Left lung (tissue), 14 donors: ENCODE measurements at regions of chr3 and their contacts with region 1.

Region 1: GRCh38 chr3:129633751-129634392 is 27.4 kb upstream of the PLXND1 start:
- DNase-seq: peak in 2 of 4 donors; percentile 34 to 71
- ATAC-seq: peak; percentile 61
- H3K4me3 ChIP-seq: no peak overlapping the region
- H3K27ac ChIP-seq: no peak overlapping the region
- H3K4me1 ChIP-seq: peaks cover 0 to 2% of the 10 kb centered on the region in 2 donors
- H3K27me3 ChIP-seq: no peaks in the 10 kb centered on the region
- CTCF ChIP-seq: no peak

Region 2: DNA sequence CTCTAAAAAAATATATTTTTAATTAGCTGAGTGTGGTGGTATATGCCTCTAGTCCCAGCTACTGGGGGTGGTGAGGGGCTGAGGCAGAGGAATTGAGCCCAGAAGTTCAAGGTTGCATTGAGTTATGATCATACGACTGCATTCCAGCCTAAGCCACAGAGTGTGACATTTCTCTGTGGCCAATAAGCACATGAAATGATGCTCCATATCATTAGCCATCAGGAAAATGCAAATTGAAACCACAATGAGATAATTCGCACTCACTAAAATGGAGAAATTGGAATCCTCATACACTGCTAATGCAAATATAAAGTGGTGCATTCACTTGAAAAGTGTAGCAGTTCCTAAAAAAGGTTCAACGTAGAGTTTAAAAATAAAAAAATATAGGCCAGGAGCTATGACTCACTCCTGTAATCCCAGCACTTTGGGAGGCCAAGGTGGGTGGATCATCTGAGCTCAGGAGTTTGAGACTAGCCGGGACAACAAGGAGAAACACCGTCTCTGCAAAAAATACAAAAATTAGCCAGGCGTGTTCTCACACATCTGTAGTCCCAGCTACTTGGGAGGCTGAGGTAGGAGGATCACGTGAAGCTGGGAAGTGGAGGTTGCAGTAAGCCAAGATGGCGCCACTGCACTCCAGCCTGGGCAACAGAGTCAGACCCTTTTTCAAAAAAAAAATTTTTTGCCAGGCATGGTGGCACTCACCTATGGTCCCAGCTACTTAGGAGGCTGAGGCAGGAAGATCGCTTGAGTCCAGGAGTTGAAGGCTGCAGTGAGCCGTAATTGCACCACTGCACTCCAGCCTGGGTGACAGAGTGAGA is 158.7 kb before region 1 on chr3:
- intact Hi-C with region 1: no loop called
- DNase-seq: no peak
- ATAC-seq: no peak
- H3K4me3 ChIP-seq: no peak overlapping the region
- H3K27ac ChIP-seq: no peak overlapping the region
- H3K4me1 ChIP-seq: no peaks in the 10 kb centered on the region
- H3K27me3 ChIP-seq: no peaks in the 10 kb centered on the region
- CTCF ChIP-seq: no peak

Region 3: GRCh38 chr3:129934234-129935123 is 300.6 kb after region 1 on chr3:
- intact Hi-C with region 1: loop called in 1 of 2 experiments (anchors 10 kb)
- DNase-seq: peak in 3 of 4 donors; percentile 29 to 67 (median 58)
- ATAC-seq: peak; percentile 77
- H3K4me3 ChIP-seq: no peak overlapping the region
- H3K27ac ChIP-seq: no peak overlapping the region
- H3K4me1 ChIP-seq: peaks cover 0 to 9% of the 10 kb centered on the region in 2 donors
- H3K27me3 ChIP-seq: no peaks in the 10 kb centered on the region
- CTCF ChIP-seq: peak; percentile 88 to 89